Gastrocnemius medialis (tissue), 4 donors: ENCODE measurements at regions of chr2 and their contacts with region 1.

Region 1: DNA sequence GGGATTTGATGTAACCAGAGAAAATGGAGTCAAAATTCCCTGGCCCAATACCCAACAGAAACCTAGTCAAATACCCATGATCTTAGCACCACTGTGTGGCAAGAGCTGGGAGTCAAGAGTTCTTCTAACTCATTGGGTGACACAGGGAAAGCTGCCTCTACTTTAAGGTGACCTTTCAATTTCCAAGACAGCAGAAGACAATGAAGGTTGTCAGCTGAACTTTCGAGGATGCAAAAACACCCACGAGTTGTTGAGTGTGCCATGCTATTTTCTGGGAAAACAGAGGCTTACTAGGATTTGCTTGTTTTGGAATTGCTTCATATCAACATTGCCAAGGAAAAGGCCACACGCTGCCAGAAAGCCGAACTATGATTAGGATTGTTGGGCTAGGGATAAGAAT is 61.6 kb upstream of the CYRIA start:
- DNase-seq: no peak
- ATAC-seq: peak; percentile 51 to 67
- H3K4me3 ChIP-seq: no peak overlapping the region
- H3K27ac ChIP-seq: peak overlapping the region in 1 of 4 donors; percentile 67
- H3K4me1 ChIP-seq: peaks cover 10 to 15% of the 10 kb centered on the region in 2 donors
- H3K27me3 ChIP-seq: no peaks in the 10 kb centered on the region
- CTCF ChIP-seq: peak in 1 of 5 experiments; percentile 18
- POLR2A ChIP-seq: no peak

Region 2: GRCh38 chr2:16608661-16609643 is 118.3 kb before region 1 on chr2:
- in situ Hi-C with region 1: no loop called
- intact Hi-C with region 1: loop called (anchors 10 kb)
- DNase-seq: peak; percentile 61 to 75
- ATAC-seq: peak; percentile 80 to 88
- H3K4me3 ChIP-seq: peak overlapping the region; percentile 34 to 60 (median 46)
- H3K27ac ChIP-seq: peak overlapping the region in 2 of 4 donors; percentile 15 to 46
- H3K4me1 ChIP-seq: peaks cover 8 to 16% of the 10 kb centered on the region in 2 donors
- H3K27me3 ChIP-seq: no peaks in the 10 kb centered on the region
- CTCF ChIP-seq: peak; percentile 87 to 94 (median 93)
- POLR2A ChIP-seq: no peak

Region 3: GRCh38 chr2:16638946-16639345 is 88.3 kb before region 1 on chr2:
- in situ Hi-C with region 1: no loop called
- intact Hi-C with region 1: loop called (anchors 2 kb)
- DNase-seq: no peak
- ATAC-seq: no peak
- H3K4me3 ChIP-seq: no peak overlapping the region
- H3K27ac ChIP-seq: peak overlapping the region in 1 of 4 donors; percentile 80
- H3K4me1 ChIP-seq: peaks cover 44 to 62% of the 10 kb centered on the region in 2 donors
- H3K27me3 ChIP-seq: no peaks in the 10 kb centered on the region
- CTCF ChIP-seq: no peak
- POLR2A ChIP-seq: no peak

Region 4: DNA sequence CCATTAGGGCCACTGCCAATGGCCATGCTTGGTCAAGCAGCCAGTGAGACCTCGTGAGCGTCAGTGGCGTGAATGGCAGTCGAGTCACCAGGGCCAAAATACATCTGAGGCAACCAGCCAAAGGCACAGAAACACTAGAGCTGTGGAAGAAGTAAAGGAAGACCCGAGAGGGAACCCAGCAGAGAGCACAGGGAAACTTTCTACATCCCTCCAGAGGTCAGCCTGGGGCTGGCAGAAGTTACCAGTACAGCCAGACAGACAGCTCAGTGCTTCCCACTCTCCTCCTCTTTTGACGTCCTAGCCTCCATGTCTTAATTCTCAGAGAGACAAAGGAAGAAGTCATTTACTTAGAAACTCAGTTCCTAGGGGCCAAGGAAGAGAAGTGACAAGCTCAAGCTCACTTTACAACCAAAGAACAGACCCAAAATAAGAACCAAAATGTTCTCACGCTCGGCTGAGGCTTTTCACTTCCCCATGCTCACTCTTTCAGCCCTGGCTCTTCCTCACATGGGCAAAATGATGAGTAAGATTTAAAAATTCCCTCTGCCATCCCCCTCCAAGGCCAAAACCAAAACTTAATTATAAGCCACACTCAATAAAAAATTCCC is 70.4 kb before region 1 on chr2:
- in situ Hi-C with region 1: no loop called
- intact Hi-C with region 1: loop called (anchors 1 kb)
- DNase-seq: peak; percentile 91 to 96
- ATAC-seq: peak; percentile 91 to 94
- H3K4me3 ChIP-seq: peak overlapping the region; percentile 0 to 23 (median 16)
- H3K27ac ChIP-seq: peak overlapping the region; percentile 82 to 90 (median 88)
- H3K4me1 ChIP-seq: peaks cover 78 to 90% of the 10 kb centered on the region in 2 donors
- H3K27me3 ChIP-seq: no peaks in the 10 kb centered on the region
- CTCF ChIP-seq: no peak
- POLR2A ChIP-seq: peak in 1 of 2 donors; percentile 37

Region 5: GRCh38 chr2:16665748-16666448 is 61.4 kb before region 1 on chr2 and contains the start of gene CYRIA:
- in situ Hi-C with region 1: no loop called
- intact Hi-C with region 1: loop called (anchors 2 kb)
- DNase-seq: peak; percentile 48 to 62
- ATAC-seq: peak; percentile 65 to 68
- H3K4me3 ChIP-seq: peak within 1 kb of the TSS; percentile 70 to 79 (median 73)
- H3K27ac ChIP-seq: peak within 1 kb of the TSS; percentile 70 to 79 (median 76)
- H3K4me1 ChIP-seq: peaks cover 21 to 28% of the 10 kb centered on the region in 2 donors
- H3K27me3 ChIP-seq: no peaks in the 10 kb centered on the region
- CTCF ChIP-seq: no peak
- POLR2A ChIP-seq: peak in 1 of 2 donors; percentile 23
- total RNA-seq, gene CYRIA: 3.3 to 8.0 (median 4.5) TPM

Region 6: GRCh38 chr2:16948053-16948452 is 220.8 kb after region 1 on chr2:
- in situ Hi-C with region 1: no loop called
- intact Hi-C with region 1: no loop called
- DNase-seq: no peak
- ATAC-seq: no peak
- H3K4me3 ChIP-seq: no peak overlapping the region
- H3K27ac ChIP-seq: no peak overlapping the region
- H3K4me1 ChIP-seq: peaks cover 0 to 1% of the 10 kb centered on the region in 2 donors
- H3K27me3 ChIP-seq: no peaks in the 10 kb centered on the region
- CTCF ChIP-seq: no peak
- POLR2A ChIP-seq: no peak

Region 7: DNA sequence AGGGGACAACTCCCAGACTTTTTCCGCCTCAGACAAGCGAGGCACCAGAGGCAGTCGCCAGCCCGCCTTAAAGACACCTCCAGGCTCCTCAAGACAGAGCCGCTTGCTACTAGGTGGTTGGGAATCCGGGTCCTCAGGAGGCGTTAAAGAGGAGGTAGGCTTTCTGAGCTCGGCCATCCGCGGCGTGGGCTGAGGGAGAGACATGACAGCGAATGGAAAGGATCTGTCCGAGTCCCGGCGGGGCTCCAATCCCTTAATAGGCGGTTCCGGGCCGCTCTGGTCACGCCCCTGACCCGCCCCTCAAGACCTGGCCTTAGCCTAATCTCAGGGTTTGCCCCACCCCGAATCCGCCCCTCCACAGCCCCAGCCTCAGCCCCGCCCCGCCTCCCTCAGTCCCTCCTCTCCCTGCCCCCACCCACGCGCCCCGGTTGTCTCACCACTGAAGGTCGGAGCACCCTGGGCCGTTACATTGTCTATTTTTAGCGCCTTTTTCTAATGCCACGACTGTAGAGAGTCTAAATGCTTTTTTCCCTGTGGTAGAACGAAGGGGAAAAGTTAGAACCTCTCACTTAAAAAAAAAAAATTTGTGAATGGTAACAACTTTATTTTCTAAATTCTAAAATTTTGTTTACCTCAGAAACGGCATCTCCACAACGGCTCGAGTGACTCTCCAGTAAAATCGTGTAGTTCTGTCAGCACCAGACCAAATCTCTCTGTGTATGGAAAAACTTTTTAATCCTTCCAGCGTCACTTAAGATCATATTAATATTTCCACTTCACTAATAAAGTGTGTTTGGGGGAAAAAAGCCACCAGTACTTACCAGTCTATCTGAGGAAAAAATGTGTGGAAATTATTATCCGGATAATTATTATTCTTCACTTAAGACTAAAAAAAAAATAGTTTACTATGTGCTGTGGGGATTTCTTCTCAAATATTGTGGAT is 791.2 kb after region 1 on chr2 and contains the start of gene RAD51AP2:
- in situ Hi-C with region 1: no loop called
- intact Hi-C with region 1: loop called (anchors 5 kb)
- DNase-seq: peak; percentile 82 to 85
- ATAC-seq: peak; percentile 95 to 96
- H3K4me3 ChIP-seq: peak within 1 kb of the TSS; percentile 53 to 60 (median 57)
- H3K27ac ChIP-seq: peak within 1 kb of the TSS; percentile 80 to 85 (median 84)
- H3K4me1 ChIP-seq: peaks cover 0 to 4% of the 10 kb centered on the region in 2 donors
- H3K27me3 ChIP-seq: no peaks in the 10 kb centered on the region
- CTCF ChIP-seq: no peak
- POLR2A ChIP-seq: peak; percentile 28 to 58
- total RNA-seq, gene RAD51AP2: not detected